AG04449 (cell line): ENCODE measurements at regions of chr17 and their contacts with region 1.

Region 1: GRCh38 chr17:40362696-40363110 is 1.8 kb downstream of the GJD3 start:
- DNase-seq: no peak
- H3K4me3 ChIP-seq: peak overlapping the region; percentile 59
- CTCF ChIP-seq: peak; percentile 92

Region 2: GRCh38 chr17:40303009-40303657 is 59.6 kb before region 1 on chr17:
- CTCF ChIA-PET with region 1: interaction called, 649 read pairs
- POLR2A ChIA-PET with region 1: interaction called, 4 read pairs
- DNase-seq: no peak
- H3K4me3 ChIP-seq: no peak overlapping the region
- CTCF ChIP-seq: peak; percentile 58

Region 3: GRCh38 chr17:40340880-40341807 is 21.6 kb before region 1 on chr17:
- CTCF ChIA-PET with region 1: interaction called, 18 read pairs
- POLR2A ChIA-PET with region 1: no interaction called
- DNase-seq: no peak
- H3K4me3 ChIP-seq: peak overlapping the region; percentile 62
- CTCF ChIP-seq: no peak

Region 4: DNA sequence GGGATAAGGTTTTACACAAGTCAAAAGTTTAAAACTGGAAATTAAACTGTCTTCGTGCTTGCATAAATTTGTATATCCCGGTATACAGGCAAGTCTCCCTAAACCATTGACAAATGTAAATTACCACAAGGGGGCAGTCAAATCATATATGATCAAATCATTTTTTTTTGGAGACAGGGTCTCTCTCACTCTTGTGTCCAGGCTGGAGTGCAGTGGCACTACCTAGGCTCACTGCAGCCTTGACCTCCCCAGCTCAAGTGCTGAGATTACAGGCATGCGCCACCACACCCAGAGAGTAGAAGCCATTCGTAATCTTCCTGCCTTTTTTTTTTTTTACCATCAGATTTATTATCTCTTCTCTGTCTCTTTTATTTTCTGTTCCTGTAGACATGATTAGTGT is 36.5 kb after region 1 on chr17:
- CTCF ChIA-PET with region 1: interaction called, 15 read pairs
- POLR2A ChIA-PET with region 1: no interaction called
- DNase-seq: peak; percentile 12
- H3K4me3 ChIP-seq: no peak overlapping the region
- CTCF ChIP-seq: peak; percentile 21

Region 5: GRCh38 chr17:40417609-40418427 is 55.1 kb after region 1 on chr17 and contains the start of gene TOP2A:
- CTCF ChIA-PET with region 1: interaction called, 54 read pairs
- POLR2A ChIA-PET with region 1: no interaction called
- DNase-seq: peak; percentile 97
- H3K4me3 ChIP-seq: peak within 1 kb of the TSS; percentile 81
- CTCF ChIP-seq: no peak

Region 6: DNA sequence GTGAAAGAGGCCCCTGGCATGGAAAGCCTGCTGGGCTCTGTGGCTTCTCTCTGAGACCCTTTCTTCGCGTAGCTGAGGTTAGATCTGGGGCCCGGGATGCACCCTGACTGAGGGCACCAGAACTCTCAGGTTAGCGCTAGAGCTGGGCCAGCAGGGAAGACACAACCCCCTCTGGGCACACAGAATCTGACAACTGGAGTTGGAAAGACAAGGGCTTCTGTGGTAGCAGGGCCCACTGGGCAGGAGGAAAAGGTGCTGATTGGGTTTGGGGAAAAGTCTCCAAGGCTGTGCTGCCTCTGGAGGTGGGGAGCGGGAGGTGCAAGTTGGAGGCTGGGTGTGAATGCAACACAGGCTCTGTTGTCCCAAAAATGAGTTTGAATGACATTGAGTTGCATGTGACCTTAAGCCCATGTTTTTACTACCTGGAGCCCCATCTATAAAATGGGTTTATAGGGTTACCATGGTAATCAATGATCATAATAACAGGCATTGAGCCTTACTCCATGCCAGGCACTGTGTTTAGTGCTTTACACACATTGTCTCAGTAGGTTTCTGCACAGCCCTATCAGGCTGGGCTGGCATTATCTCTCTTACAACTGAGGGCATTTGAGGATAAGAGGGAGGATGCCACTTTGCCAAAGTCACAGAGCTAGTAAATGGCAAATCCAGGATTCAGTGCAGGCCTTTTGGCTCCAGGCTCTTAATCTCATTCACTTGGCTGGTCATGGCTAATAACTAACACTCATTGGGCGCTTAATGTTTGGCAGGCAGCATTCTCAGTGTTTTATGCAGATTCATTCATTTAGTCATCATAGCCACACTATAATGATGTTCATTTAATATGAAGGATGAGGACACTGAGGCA is 71.1 kb after region 1 on chr17:
- CTCF ChIA-PET with region 1: no interaction called
- POLR2A ChIA-PET with region 1: no interaction called
- DNase-seq: no peak
- H3K4me3 ChIP-seq: no peak overlapping the region
- CTCF ChIP-seq: peak; percentile 51

Region 7: GRCh38 chr17:40536295-40537171 is 173.8 kb after region 1 on chr17:
- CTCF ChIA-PET with region 1: interaction called, 213 read pairs
- POLR2A ChIA-PET with region 1: no interaction called
- DNase-seq: no peak
- H3K4me3 ChIP-seq: no peak overlapping the region
- CTCF ChIP-seq: no peak